ENCODE measurements at regions of chr22 and their contacts with region 1.

Region 1: GRCh38 chr22:37199103-37199759 is 11.2 kb upstream of the C1QTNF6 start:
- DNase-seq: peak; percentile 96 to 100 (median 99)
- ATAC-seq: peak; percentile 92
- H3K4me3 ChIP-seq: peak overlapping the region; percentile 57 to 73
- H3K4me3 Mint-ChIP-seq: peak overlapping the region; percentile 85
- H3K27ac ChIP-seq: peak overlapping the region; percentile 67 to 95
- H3K27ac Mint-ChIP-seq: peak overlapping the region; percentile 95
- H3K4me1 ChIP-seq: peaks cover 61% of the 10 kb centered on the region
- H3K4me1 Mint-ChIP-seq: peaks cover 70% of the 10 kb centered on the region
- H3K27me3 ChIP-seq: no peaks in the 10 kb centered on the region
- H3K27me3 Mint-ChIP-seq: no peaks in the 10 kb centered on the region
- CTCF ChIP-seq: peak; percentile 87

Region 2: GRCh38 chr22:36781656-36782627 is 417.3 kb before region 1 on chr22:
- CTCF ChIA-PET with region 1: interaction called, 3 read pairs
- POLR2A ChIA-PET with region 1: no interaction called
- intact Hi-C with region 1: loop called (anchors 1 to 2 kb)
- DNase-seq: peak; percentile 71 to 93 (median 85)
- ATAC-seq: peak; percentile 96
- H3K4me3 ChIP-seq: no peak overlapping the region
- H3K4me3 Mint-ChIP-seq: no peak overlapping the region
- H3K27ac ChIP-seq: no peak overlapping the region
- H3K27ac Mint-ChIP-seq: peak overlapping the region; percentile 41
- H3K4me1 ChIP-seq: peaks cover 11% of the 10 kb centered on the region
- H3K4me1 Mint-ChIP-seq: peaks cover 16% of the 10 kb centered on the region
- H3K27me3 ChIP-seq: peaks cover 0 to 2% of the 10 kb centered on the region in 2 experiments
- H3K27me3 Mint-ChIP-seq: peaks cover 2% of the 10 kb centered on the region
- CTCF ChIP-seq: peak; percentile 95

Region 3: GRCh38 chr22:37045958-37046357 is 153.3 kb before region 1 on chr22:
- CTCF ChIA-PET with region 1: interaction called, 3 read pairs
- POLR2A ChIA-PET with region 1: no interaction called
- intact Hi-C with region 1: loop called in 1 of 2 experiments (anchors 1 kb)
- DNase-seq: peak in 2 of 9 experiments; percentile 32 to 46
- ATAC-seq: peak; percentile 26
- H3K4me3 ChIP-seq: no peak overlapping the region
- H3K4me3 Mint-ChIP-seq: no peak overlapping the region
- H3K27ac ChIP-seq: no peak overlapping the region
- H3K27ac Mint-ChIP-seq: no peak overlapping the region
- H3K4me1 ChIP-seq: no peaks in the 10 kb centered on the region
- H3K4me1 Mint-ChIP-seq: no peaks in the 10 kb centered on the region
- H3K27me3 ChIP-seq: no peaks in the 10 kb centered on the region
- H3K27me3 Mint-ChIP-seq: peaks cover 5% of the 10 kb centered on the region
- CTCF ChIP-seq: peak; percentile 30

Region 4: GRCh38 chr22:37121887-37122591 is 77.2 kb before region 1 on chr22:
- CTCF ChIA-PET with region 1: interaction called, 31 read pairs
- POLR2A ChIA-PET with region 1: interaction called, 4 read pairs
- intact Hi-C with region 1: loop called (anchors 1 kb)
- DNase-seq: peak; percentile 81 to 99 (median 89)
- ATAC-seq: peak; percentile 95
- H3K4me3 ChIP-seq: peak overlapping the region; percentile 18 to 34
- H3K4me3 Mint-ChIP-seq: peak overlapping the region; percentile 71
- H3K27ac ChIP-seq: peak overlapping the region; percentile 93 to 98
- H3K27ac Mint-ChIP-seq: peak overlapping the region; percentile 99
- H3K4me1 ChIP-seq: peaks cover 36% of the 10 kb centered on the region
- H3K4me1 Mint-ChIP-seq: peaks cover 55% of the 10 kb centered on the region
- H3K27me3 ChIP-seq: no peaks in the 10 kb centered on the region
- H3K27me3 Mint-ChIP-seq: no peaks in the 10 kb centered on the region
- CTCF ChIP-seq: no peak

Region 5: GRCh38 chr22:37176218-37177091 is 22.8 kb before region 1 on chr22:
- CTCF ChIA-PET with region 1: interaction called, 28 read pairs
- POLR2A ChIA-PET with region 1: interaction called, 3 read pairs
- intact Hi-C with region 1: no loop called
- DNase-seq: peak in 1 of 9 experiments; percentile 39
- ATAC-seq: peak; percentile 51
- H3K4me3 ChIP-seq: no peak overlapping the region
- H3K4me3 Mint-ChIP-seq: peak overlapping the region; percentile 50
- H3K27ac ChIP-seq: no peak overlapping the region
- H3K27ac Mint-ChIP-seq: peak overlapping the region; percentile 77
- H3K4me1 ChIP-seq: peaks cover 16% of the 10 kb centered on the region
- H3K4me1 Mint-ChIP-seq: peaks cover 34% of the 10 kb centered on the region
- H3K27me3 ChIP-seq: no peaks in the 10 kb centered on the region
- H3K27me3 Mint-ChIP-seq: no peaks in the 10 kb centered on the region
- CTCF ChIP-seq: no peak

Region 6: DNA sequence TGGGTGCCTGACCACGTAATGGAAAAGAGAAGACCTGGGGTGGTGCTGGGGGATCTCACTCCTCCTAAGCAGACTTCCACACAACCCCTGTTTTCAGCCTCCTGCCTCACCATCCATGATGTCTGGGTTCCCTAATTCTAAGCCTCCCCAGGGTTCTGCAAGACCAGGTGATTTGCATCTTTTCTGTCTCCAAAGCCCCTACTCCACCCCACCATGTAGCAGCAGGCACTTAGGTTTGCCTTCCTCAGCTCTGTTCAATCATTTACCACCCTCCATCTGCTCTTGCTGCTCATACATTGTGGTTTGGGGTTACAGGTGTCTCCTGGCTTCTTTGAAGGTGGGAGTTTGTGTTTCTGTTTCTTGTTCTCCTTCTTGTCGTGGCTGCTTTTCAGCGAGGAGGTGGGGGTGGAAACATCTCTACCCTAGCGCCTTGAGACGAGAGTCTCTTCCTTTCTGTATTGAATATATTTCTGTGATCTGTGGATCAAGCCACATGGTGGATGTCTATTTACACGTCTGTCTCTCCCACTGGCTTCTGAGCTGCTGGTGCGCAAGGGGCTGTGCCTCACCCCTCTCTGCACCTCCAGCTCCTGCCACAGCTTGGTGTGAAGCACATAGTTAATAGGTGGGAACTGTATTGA is 19.7 kb after region 1 on chr22:
- CTCF ChIA-PET with region 1: interaction called, 59 read pairs
- POLR2A ChIA-PET with region 1: interaction called, 18 read pairs
- intact Hi-C with region 1: loop called (anchors 1 kb)
- DNase-seq: peak in 8 of 9 experiments; percentile 43 to 92 (median 78)
- ATAC-seq: peak; percentile 79
- H3K4me3 ChIP-seq: peak overlapping the region; percentile 23 to 52
- H3K4me3 Mint-ChIP-seq: peak overlapping the region; percentile 74
- H3K27ac ChIP-seq: peak overlapping the region; percentile 54 to 60
- H3K27ac Mint-ChIP-seq: peak overlapping the region; percentile 95
- H3K4me1 ChIP-seq: peaks cover 79% of the 10 kb centered on the region
- H3K4me1 Mint-ChIP-seq: peaks cover 90% of the 10 kb centered on the region
- H3K27me3 ChIP-seq: no peaks in the 10 kb centered on the region
- H3K27me3 Mint-ChIP-seq: no peaks in the 10 kb centered on the region
- CTCF ChIP-seq: no peak

Region 7: GRCh38 chr22:37244114-37244921 is 45.1 kb after region 1 on chr22 and contains the start of gene RAC2:
- CTCF ChIA-PET with region 1: interaction called, 89 read pairs
- POLR2A ChIA-PET with region 1: interaction called, 32 read pairs
- intact Hi-C with region 1: loop called (anchors 1 kb)
- DNase-seq: peak; percentile 71 to 95 (median 90)
- ATAC-seq: peak; percentile 54
- H3K4me3 ChIP-seq: peak within 1 kb of the TSS; percentile 79 to 98
- H3K4me3 Mint-ChIP-seq: peak within 1 kb of the TSS; percentile 98
- H3K27ac ChIP-seq: peak within 1 kb of the TSS; percentile 81
- H3K27ac Mint-ChIP-seq: peak within 1 kb of the TSS; percentile 100
- H3K4me1 ChIP-seq: peaks cover 45% of the 10 kb centered on the region
- H3K4me1 Mint-ChIP-seq: peaks cover 55% of the 10 kb centered on the region
- H3K27me3 ChIP-seq: no peaks in the 10 kb centered on the region
- H3K27me3 Mint-ChIP-seq: no peaks in the 10 kb centered on the region
- CTCF ChIP-seq: no peak
- total RNA-seq, gene RAC2: 152 to 159 TPM

Region 8: GRCh38 chr22:37370306-37370979 is 171.2 kb after region 1 on chr22:
- CTCF ChIA-PET with region 1: no interaction called
- POLR2A ChIA-PET with region 1: no interaction called
- intact Hi-C with region 1: no loop called
- DNase-seq: no peak
- ATAC-seq: no peak
- H3K4me3 ChIP-seq: no peak overlapping the region
- H3K4me3 Mint-ChIP-seq: no peak overlapping the region
- H3K27ac ChIP-seq: no peak overlapping the region
- H3K27ac Mint-ChIP-seq: peak overlapping the region; percentile 32
- H3K4me1 ChIP-seq: no peaks in the 10 kb centered on the region
- H3K4me1 Mint-ChIP-seq: no peaks in the 10 kb centered on the region
- H3K27me3 ChIP-seq: no peaks in the 10 kb centered on the region
- H3K27me3 Mint-ChIP-seq: peaks cover 7% of the 10 kb centered on the region
- CTCF ChIP-seq: no peak